MCF 10A (cell line): ENCODE measurements at regions of chr14 and their contacts with region 1.

Region 1: DNA sequence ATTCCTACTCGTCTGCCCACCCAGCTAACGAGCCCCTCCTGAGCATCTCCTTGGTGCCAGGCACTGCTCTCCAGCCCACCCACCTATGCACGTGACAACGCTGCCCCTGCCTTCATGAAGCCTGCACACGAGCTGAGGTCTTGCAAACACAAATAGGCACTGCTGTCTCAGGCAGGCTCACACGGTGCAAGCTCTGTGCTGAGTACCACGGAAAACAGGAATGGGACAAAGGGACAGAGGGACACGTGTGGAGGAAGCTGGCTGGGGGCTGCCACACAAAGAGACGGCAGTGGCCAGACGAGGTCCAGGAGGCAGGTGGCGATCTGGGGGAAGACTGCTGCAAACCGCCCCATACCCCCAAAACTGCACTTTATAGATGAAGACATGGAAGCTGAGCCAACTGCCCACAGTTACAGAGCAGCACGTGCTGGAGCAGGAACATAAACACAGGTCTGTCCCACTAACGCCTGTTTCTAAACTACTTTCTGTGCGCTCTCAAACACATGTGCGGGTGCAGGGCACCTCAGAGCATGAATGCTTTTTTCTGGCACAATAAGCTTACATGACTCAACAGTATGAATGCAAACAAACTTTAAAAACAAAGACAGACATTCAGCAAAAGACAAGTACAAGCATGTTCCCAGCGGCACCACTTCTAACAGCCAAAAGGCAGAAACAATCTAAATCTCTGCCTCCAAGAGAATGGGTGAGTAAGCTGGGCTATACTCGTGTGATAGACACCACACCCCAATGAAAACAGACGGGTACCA is 64.5 kb downstream of the AMN start:
- DNase-seq: peak; percentile 94
- H3K4me3 Mint-ChIP-seq: peak overlapping the region; percentile 60
- H3K27ac Mint-ChIP-seq: peak overlapping the region; percentile 75
- H3K4me1 Mint-ChIP-seq: peaks cover 40% of the 10 kb centered on the region
- H3K27me3 Mint-ChIP-seq: no peaks in the 10 kb centered on the region
- CTCF ChIP-seq: no peak

Region 2: GRCh38 chr14:103014466-103015319 is 27.7 kb after region 1 on chr14:
- CTCF ChIA-PET with region 1: no interaction called
- POLR2A ChIA-PET with region 1: interaction called, 32 read pairs
- intact Hi-C with region 1: no loop called
- DNase-seq: peak; percentile 39
- H3K4me3 Mint-ChIP-seq: peak overlapping the region; percentile 50
- H3K27ac Mint-ChIP-seq: peak overlapping the region; percentile 82
- H3K4me1 Mint-ChIP-seq: peaks cover 50% of the 10 kb centered on the region
- H3K27me3 Mint-ChIP-seq: no peaks in the 10 kb centered on the region
- CTCF ChIP-seq: no peak

Region 3: GRCh38 chr14:103057365-103058096 is 70.5 kb after region 1 on chr14 and contains the start of gene CDC42BPB:
- CTCF ChIA-PET with region 1: no interaction called
- POLR2A ChIA-PET with region 1: interaction called, 15 read pairs
- intact Hi-C with region 1: loop called (anchors 5 kb)
- DNase-seq: peak; percentile 90
- H3K4me3 Mint-ChIP-seq: peak within 1 kb of the TSS; percentile 81
- H3K27ac Mint-ChIP-seq: peak within 1 kb of the TSS; percentile 82
- H3K4me1 Mint-ChIP-seq: peaks cover 18% of the 10 kb centered on the region
- H3K27me3 Mint-ChIP-seq: no peaks in the 10 kb centered on the region
- CTCF ChIP-seq: no peak
- total RNA-seq, gene CDC42BPB: 82.7 and 91.1 TPM in 2 replicates

Region 4: GRCh38 chr14:103067233-103067954 is 80.4 kb after region 1 on chr14:
- CTCF ChIA-PET with region 1: interaction called, 3 read pairs
- POLR2A ChIA-PET with region 1: interaction called, 21 read pairs
- intact Hi-C with region 1: no loop called
- DNase-seq: peak; percentile 86
- H3K4me3 Mint-ChIP-seq: peak overlapping the region; percentile 13
- H3K27ac Mint-ChIP-seq: peak overlapping the region; percentile 98
- H3K4me1 Mint-ChIP-seq: peaks cover 19% of the 10 kb centered on the region
- H3K27me3 Mint-ChIP-seq: no peaks in the 10 kb centered on the region
- CTCF ChIP-seq: no peak

Region 5: GRCh38 chr14:103243764-103244737 is 257.1 kb after region 1 on chr14:
- CTCF ChIA-PET with region 1: no interaction called
- POLR2A ChIA-PET with region 1: no interaction called
- intact Hi-C with region 1: no loop called
- DNase-seq: peak; percentile 80
- H3K4me3 Mint-ChIP-seq: no peak overlapping the region
- H3K27ac Mint-ChIP-seq: peak overlapping the region; percentile 78
- H3K4me1 Mint-ChIP-seq: peaks cover 19% of the 10 kb centered on the region
- H3K27me3 Mint-ChIP-seq: no peaks in the 10 kb centered on the region
- CTCF ChIP-seq: no peak